IMR-90 (cell line): ENCODE measurements at regions of chr2 and their contacts with region 1.

Region 1: GRCh38 chr2:235378261-235378660 is 115.6 kb upstream of the AGAP1 start:
- DNase-seq: peak; percentile 10
- ATAC-seq: no peak
- H3K4me3 ChIP-seq: no peak overlapping the region
- H3K27ac ChIP-seq: no peak overlapping the region
- H3K4me1 ChIP-seq: peaks cover 2% of the 10 kb centered on the region; the same call in 1 of the 2 replicates
- H3K27me3 ChIP-seq: peaks cover 9% of the 10 kb centered on the region
- CTCF ChIP-seq: no peak
- POLR2A ChIP-seq: no peak
- RAD21 ChIP-seq: no peak

Region 2: DNA sequence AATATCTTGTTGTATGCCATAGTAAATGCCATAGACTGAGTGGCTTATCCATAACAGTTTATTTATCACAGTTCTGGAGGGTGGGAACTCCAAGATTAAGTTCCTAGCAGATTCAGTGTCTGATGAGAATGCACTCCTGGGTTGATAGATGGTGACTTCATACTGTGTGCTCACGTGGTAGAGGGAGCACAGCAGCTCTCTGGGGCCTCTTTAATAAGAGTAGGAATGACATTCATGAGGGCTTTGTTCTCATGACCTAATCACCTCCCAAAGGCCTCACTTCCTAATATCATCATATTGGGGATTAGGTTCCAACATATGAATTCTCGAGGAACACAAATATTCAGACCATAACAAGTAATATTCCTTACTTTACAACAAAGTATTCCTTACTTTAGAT is 524.5 kb before region 1 on chr2:
- CTCF ChIA-PET with region 1: no interaction called
- POLR2A ChIA-PET with region 1: no interaction called
- dilution Hi-C with region 1: no loop called
- in situ Hi-C with region 1: no loop called
- intact Hi-C with region 1: no loop called
- DNase-seq: peak; percentile 19
- ATAC-seq: no peak
- H3K4me3 ChIP-seq: no peak overlapping the region
- H3K27ac ChIP-seq: no peak overlapping the region
- H3K4me1 ChIP-seq: 0 out of 2 replicates have a peak, but pooled peaks cover under 1% of the 10 kb centered on the region
- H3K27me3 ChIP-seq: no peaks in the 10 kb centered on the region
- CTCF ChIP-seq: no peak
- POLR2A ChIP-seq: no peak
- RAD21 ChIP-seq: no peak

Region 3: GRCh38 chr2:235347691-235348090 is 30.6 kb before region 1 on chr2:
- CTCF ChIA-PET with region 1: interaction called, 10 read pairs
- POLR2A ChIA-PET with region 1: no interaction called
- dilution Hi-C with region 1: no loop called
- in situ Hi-C with region 1: no loop called
- intact Hi-C with region 1: no loop called
- DNase-seq: peak; percentile 85
- ATAC-seq: peak; percentile 46; the same call in 1 of the 2 replicates
- H3K4me3 ChIP-seq: no peak overlapping the region
- H3K27ac ChIP-seq: no peak overlapping the region
- H3K4me1 ChIP-seq: peaks cover 2% of the 10 kb centered on the region; the same call in 1 of the 2 replicates
- H3K27me3 ChIP-seq: peaks cover 20% of the 10 kb centered on the region
- CTCF ChIP-seq: no peak
- POLR2A ChIP-seq: no peak
- RAD21 ChIP-seq: no peak